Astrocyte of the cerebellum (primary cell): ENCODE measurements at regions of chr16 and their contacts with region 1.

Region 1: DNA sequence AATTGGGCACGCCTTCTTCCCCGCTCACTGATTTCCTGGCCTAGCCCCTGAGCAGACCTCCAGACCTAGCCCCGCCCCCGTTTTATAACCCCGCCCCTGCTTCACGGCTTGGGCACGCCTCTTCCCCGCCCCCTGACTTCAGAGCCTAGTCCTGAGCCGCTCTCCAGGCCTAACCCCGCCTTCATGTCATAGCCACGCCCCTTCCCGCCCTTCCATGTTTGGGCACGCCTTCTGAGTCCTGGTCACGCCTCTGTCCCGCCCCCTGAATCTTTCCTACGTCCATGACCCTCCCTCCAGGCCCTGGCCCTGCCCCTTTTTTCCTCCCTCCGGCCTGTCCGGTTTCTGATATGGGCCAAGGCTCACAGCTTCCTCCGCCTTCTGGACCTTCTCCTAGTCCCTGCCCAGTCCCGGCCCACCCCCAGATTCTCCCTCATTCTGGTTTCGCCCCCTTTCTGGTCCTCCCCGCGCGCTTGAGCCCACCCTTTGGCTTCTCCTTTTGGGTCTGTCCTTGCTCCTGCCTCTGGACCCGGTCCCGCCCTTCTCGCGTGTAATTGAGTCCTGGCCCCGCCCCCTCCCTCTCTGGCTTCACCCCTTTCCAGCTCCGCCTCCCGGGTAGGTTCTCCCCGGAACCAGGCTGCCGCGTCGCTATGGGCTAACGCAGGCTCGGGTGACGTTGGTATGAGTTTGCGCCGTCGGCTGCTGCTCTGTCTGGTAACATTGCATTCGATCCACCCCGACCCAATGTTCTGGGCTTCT is 15.1 kb upstream of the EEF2K start:
- DNase-seq: peak; percentile 99
- H3K4me3 ChIP-seq: peak overlapping the region; percentile 53
- CTCF ChIP-seq: no peak

Region 2: DNA sequence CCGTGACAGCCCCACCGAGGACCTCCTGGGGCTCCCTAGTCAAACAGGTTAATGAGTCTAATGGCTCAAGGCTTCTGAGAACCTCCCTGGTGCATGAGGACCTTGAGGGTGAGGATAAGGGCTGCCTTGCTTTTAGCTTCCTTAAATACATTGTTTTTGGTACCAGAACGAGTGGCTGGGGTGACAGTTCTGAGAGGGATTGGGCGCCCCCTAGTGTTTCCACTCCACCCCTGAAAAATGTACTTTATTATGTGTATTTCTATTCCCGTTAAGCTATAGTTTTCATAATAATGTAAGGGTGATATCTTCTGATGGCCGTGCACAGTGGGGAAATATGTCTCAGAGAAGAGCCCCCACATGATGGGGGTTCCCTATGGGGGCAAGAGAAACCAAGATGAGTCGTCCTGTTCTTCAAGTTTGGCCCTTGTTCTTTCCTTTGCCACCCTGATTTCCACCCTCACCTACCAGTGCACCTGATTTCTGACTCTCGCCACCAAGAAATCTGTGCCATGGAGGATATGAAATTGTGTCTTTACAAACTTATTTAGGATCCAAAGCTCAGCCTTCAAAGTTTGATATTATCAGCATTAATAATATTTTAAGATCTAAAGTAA is 113.1 kb before region 1 on chr16:
- in situ Hi-C with region 1: loop called (anchors 25 kb)
- DNase-seq: peak; percentile 39
- H3K4me3 ChIP-seq: no peak overlapping the region
- CTCF ChIP-seq: peak; percentile 85

Region 3: DNA sequence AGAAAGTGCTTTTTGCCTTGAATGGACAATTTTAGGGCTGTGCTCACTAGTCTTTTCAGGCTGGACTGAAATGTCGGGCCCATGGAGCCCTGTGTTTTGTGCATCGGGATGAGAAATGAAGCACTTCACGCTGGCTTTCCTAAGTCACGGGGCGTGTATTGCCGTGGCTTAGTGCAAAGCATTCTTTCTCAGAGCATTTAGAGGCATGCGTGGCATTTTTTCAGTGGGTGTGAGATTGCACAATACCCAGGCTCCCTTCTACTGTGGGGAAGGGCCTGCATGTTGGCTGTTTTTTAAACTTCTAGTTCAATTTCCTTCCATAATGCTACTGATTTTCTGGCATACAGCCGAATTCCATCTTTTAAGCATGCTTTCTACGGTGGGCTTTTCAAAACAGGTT is 93.7 kb after region 1 on chr16:
- in situ Hi-C with region 1: loop called (anchors 5 kb)
- DNase-seq: no peak
- H3K4me3 ChIP-seq: no peak overlapping the region
- CTCF ChIP-seq: no peak